Left cardiac atrium (tissue), 4 donors: ENCODE measurements at regions of chr12 and their contacts with region 1.

Region 1: GRCh38 chr12:49580572-49581535 is 12.9 kb upstream of the MCRS1 start:
- DNase-seq: peak; percentile 75
- ATAC-seq: peak; percentile 78 to 83

Region 2: DNA sequence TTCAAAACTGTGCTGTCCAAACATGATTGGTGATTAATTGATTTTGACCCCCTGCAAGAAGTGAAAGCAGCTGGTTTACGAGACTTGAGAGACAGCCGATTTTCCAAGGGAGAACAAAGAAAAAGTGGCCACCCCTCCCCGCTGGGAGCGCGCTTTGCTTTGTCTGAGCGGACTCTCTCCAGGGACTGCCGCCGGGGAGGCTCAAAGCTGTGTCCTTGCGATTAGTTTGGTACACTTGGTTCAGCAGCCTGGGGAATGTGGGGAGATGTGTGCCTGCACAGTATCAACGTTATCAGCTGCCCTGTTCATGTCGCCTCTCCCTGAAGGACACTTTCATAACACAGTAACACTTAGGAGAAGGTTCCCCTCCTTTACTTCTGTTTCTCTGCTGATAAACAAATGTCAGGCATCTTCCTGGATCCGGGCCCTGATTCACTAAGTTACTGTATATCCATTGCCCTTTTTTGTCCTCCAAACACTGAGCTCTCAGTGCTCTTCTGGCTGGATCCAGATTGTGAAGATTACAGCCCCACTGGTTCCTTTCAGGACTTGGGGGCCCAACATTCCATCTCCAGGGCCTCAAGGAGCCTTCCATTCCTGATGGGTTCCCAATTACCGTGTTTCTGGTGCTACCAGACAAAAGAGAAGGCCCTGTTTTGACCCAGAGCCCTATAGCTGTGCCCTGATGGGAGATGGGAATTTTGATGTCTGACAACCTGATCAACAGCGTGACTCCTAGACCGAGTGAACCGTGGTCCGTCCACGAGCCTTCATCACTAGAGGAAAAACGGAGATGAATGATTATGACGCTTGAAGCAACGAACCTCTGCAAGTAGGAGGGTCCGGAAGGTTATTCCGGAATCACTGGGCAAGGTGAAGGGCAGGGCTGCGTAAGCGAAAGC is 347.7 kb before region 1 on chr12:
- intact Hi-C with region 1: no loop called
- DNase-seq: peak; percentile 68
- ATAC-seq: peak; percentile 46 to 51

Region 3: GRCh38 chr12:49366652-49367380 is 214.0 kb before region 1 on chr12:
- intact Hi-C with region 1: loop called in 1 of 2 experiments (anchors 5 kb)
- DNase-seq: peak; percentile 91
- ATAC-seq: peak; percentile 95 to 98

Region 4: DNA sequence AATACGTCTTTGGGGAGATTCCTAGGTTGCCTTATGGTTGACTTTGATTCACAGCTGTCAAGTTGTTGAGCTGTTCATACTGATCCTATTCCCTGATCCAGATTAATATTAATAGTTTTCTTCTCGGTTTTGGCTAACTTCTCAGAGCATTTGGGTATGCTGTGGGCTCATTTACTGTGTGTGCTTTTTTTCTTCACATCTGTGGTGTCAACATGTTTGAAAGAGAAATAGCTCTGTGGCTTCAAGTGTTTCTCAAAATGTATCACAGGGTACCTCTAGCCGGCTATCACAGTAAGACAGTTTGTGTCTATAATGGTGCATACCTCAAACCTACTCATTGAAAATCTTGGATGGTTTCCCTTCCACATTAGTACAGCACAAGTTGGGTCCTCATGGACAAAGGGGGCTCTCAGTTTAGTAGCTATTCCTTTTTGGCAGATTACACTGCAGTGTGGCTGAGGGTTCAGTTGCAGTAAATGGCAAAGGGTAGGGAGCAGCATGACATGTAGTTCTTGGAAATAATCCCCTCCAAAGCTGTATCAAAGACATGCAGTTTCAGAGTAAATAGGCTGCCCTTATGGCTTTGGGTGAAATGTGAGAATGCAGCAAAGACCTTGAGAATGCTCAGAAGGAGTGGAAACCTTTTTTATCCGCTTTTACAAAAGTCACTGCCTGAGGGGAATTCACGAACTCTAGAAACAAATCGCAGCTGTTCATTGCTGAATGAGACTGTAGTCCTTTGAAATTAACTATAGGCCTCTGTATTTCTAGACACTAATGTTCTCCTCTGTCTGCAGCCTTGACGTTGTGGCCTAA is 1080.7 kb after region 1 on chr12:
- intact Hi-C with region 1: no loop called
- DNase-seq: no peak
- ATAC-seq: no peak